Caco-2 (cell line): ENCODE measurements at regions of chr11 and their contacts with region 1.

Region 1: DNA sequence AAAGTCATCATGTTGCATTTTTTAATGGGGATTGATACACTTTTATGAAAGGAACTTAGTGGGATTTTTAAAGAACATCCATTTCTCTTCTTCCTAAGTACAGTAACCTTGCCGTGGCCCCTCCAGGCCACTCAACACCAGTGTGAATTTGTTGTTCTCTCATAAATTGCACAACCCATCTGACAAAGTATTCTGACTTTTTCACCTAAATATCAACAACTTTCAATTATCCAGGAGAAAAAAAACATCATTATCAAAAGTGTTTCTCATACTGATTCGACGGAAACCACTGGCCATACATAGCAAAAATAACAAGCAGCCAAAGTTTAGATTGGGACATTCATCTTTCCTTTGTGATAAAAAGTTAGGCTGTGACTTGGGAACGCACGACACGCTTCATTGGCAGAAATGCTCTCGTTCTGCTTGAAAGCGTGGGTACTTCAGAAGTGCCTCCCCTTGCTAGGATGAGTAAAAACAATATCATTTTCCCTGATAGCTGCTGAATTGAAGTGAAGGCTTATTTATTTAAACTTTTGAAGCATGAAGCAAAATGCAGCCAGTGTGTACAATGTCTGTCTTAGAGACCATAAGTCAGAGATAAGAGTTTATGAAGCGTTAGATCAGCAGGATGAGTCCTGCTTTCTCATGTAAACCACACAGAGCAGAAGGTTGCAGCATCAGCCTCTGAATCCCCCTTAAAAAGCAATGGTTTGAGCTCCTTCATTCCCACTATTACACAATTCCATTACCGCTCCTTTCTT is 20.6 kb upstream of the EIF3M start:
- DNase-seq: no peak
- H3K4me3 ChIP-seq: no peak overlapping the region
- H3K4me3 Mint-ChIP-seq: no peak overlapping the region
- H3K27ac Mint-ChIP-seq: no peak overlapping the region
- H3K4me1 ChIP-seq: no peaks in the 10 kb centered on the region
- H3K4me1 Mint-ChIP-seq: peaks cover 7% of the 10 kb centered on the region
- H3K27me3 ChIP-seq: no peaks in the 10 kb centered on the region
- H3K27me3 Mint-ChIP-seq: no peaks in the 10 kb centered on the region
- CTCF ChIP-seq: no peak

Region 2: DNA sequence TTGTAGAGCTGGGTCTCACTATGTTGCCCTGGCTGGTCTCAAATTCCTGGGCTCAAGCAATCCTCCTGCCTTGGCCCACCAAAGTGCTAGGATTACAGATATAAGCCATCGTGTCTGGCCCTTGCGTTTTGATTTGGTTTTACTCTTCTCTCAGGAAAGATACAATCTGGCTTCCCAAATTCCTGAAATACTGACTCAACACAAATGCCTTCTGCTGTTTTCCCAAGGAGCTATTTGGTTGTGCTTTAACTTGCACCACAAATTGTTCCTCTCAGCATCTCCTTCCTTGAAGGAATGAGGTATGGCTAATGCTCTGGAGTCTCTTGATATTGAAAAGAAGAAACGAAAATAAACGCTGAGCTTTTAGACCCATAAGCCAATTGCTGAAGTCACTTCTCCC is 641.9 kb before region 1 on chr11:
- CTCF ChIA-PET with region 1: no interaction called
- POLR2A ChIA-PET with region 1: no interaction called
- intact Hi-C with region 1: no loop called
- DNase-seq: no peak
- H3K4me3 ChIP-seq: no peak overlapping the region
- H3K4me3 Mint-ChIP-seq: no peak overlapping the region
- H3K27ac Mint-ChIP-seq: no peak overlapping the region
- H3K4me1 ChIP-seq: no peaks in the 10 kb centered on the region
- H3K4me1 Mint-ChIP-seq: no peaks in the 10 kb centered on the region
- H3K27me3 ChIP-seq: no peaks in the 10 kb centered on the region; the same call in 1 of the 2 replicates
- H3K27me3 Mint-ChIP-seq: peaks cover 4% of the 10 kb centered on the region
- CTCF ChIP-seq: no peak

Region 3: DNA sequence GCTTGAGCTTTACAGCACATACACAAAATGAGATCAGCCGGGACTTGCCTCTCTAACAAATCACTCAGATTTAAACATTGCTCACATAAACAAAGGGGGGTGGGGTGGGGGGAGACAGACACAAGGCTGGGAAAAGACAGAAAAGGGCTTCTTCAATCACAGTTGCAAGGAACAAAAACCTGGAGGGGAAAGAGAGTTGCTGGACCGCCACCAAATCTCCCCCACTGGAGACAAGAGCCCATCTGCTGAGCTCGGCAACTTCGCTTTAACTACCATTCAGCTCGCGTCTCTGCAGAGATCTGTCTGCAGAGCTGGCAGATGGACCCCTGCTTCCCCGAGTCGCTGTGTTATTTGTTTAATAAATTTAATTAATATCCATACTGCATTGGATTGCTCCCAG is 307.2 kb before region 1 on chr11:
- CTCF ChIA-PET with region 1: no interaction called
- POLR2A ChIA-PET with region 1: no interaction called
- intact Hi-C with region 1: no loop called
- DNase-seq: no peak
- H3K4me3 ChIP-seq: no peak overlapping the region
- H3K4me3 Mint-ChIP-seq: no peak overlapping the region
- H3K27ac Mint-ChIP-seq: no peak overlapping the region
- H3K4me1 ChIP-seq: no peaks in the 10 kb centered on the region
- H3K4me1 Mint-ChIP-seq: no peaks in the 10 kb centered on the region
- H3K27me3 ChIP-seq: no peaks in the 10 kb centered on the region; the same call in 1 of the 2 replicates
- H3K27me3 Mint-ChIP-seq: peaks cover 23% of the 10 kb centered on the region
- CTCF ChIP-seq: no peak

Region 4: DNA sequence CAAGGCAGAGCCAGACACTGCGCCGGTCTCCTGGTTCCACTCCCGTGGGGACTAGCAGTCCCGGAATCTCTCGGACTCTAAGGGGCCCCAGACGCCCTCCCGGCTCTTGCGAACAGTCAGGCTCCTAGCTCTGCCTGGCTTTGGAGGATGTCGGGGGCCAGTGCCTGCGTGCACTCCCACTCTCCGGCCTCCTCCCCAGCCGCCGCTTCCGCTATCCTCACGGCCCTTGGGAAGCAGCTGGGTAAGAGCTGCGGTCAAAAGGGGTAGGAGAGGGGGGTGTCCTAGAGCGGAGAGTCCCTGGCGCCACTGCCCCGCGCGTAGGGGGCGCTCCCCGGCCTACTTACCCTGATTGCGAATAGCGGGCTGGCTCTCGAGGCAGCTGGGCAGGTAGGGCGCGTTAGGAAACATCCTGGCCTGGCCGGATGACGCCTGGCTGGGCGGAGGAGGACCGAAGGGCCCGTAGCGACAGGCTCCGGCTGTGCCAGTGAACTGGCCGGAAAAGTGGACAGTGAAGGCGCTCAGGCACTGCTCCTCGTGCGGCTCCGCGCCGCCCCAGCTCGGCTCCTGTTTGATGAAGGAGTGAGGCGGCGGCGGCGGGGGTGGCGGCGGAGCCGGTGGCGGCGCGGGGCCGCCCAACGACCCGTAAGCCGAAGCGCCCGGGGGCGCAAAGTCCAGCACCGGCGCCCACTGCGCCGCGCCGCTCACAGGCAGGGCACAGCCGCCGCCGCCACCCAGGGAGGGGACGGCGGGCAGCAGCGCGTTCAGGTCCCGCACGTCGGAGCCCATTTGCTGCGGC is 128.5 kb before region 1 on chr11:
- CTCF ChIA-PET with region 1: no interaction called
- POLR2A ChIA-PET with region 1: interaction called, 10 read pairs
- intact Hi-C with region 1: no loop called
- DNase-seq: peak; percentile 58 to 69
- H3K4me3 ChIP-seq: peak overlapping the region; percentile 71
- H3K4me3 Mint-ChIP-seq: peak overlapping the region; percentile 86
- H3K27ac Mint-ChIP-seq: peak overlapping the region; percentile 77
- H3K4me1 ChIP-seq: peaks cover 4% of the 10 kb centered on the region; the same call in 1 of the 2 replicates
- H3K4me1 Mint-ChIP-seq: no peaks in the 10 kb centered on the region
- H3K27me3 ChIP-seq: no peaks in the 10 kb centered on the region; the same call in 1 of the 2 replicates
- H3K27me3 Mint-ChIP-seq: no peaks in the 10 kb centered on the region
- CTCF ChIP-seq: peak; percentile 27 to 39